GM10248 (cell line): ENCODE measurements at regions of chr16 and their contacts with region 1.

Region 1: DNA sequence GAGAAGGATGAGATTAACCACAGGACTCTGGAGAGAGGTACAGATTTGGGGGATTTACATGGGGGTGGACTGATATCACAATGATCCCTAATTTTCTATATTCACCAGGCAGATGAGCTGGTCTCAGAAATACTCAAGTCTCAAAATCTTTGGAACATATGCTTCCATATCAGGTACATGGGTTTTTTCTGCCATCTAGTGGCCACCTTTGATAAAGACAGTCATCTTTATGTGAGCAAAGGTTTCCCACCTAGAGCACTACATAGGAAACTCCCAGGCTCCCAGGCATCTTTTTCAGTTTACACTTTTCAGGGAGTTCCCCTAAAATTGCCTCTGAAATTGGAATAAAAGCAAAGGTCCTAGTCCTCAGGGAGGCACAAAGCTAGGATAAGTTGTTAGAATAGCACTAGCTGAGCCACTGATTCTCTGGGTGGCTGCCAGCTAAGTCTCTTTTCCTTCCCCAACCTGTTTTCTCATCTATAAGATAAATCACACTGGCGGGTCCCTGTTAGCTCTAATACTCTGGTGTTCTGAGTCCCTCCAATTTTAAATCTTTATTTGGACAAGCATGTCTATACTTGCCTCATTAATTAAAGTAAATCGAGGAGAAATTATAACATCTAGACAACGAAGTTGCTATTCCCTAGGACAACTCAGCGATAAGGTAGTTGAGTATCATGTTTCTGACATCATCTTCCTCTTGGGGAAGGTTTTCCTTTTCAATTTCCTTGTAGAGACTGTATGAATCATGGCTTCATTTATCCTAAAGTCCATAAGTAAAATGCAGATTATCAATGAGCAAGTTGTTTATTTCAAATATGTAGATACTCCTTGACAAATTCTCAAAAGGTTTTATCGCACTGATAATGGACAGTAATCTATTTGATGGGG is 19.0 kb upstream of the MON1B start:
- DNase-seq: peak; percentile 52
- CTCF ChIP-seq: peak; percentile 67

Region 2: DNA sequence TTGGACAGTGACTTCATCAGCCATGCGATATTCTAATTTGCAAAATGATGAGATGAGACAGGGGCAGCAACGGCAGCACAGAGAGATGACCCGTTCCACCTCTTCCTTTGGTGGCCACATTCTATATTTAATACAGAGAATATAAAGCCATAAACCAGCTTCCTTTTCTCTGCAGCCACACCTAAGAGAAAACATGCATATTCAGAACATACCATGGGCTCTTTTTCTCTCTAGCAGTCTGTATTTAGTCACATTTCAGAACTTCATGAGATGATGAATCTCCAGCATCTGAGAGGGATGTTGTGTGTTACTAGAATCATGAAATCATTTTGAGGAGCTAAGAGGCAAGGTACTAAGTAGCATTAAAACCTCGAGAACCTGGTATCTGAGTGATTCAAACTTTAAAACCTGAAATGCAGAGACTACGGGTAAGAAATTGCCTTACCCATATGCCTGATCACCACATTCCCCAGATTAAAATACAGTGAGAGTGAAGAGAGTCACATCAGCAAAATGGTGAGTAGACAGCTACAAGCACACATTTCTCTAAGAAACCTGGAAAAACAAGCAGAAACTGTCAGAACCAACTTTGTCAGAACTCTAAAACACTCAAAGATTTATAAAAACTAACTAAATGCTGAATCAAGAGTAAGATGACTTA is 1390.2 kb before region 1 on chr16:
- CTCF ChIA-PET with region 1: interaction called, 37 read pairs
- POLR2A ChIA-PET with region 1: no interaction called
- DNase-seq: no peak
- CTCF ChIP-seq: no peak

Region 3: GRCh38 chr16:75787440-75787839 is 1384.5 kb before region 1 on chr16:
- CTCF ChIA-PET with region 1: interaction called, 37 read pairs
- POLR2A ChIA-PET with region 1: no interaction called
- DNase-seq: no peak
- CTCF ChIP-seq: no peak

Region 4: DNA sequence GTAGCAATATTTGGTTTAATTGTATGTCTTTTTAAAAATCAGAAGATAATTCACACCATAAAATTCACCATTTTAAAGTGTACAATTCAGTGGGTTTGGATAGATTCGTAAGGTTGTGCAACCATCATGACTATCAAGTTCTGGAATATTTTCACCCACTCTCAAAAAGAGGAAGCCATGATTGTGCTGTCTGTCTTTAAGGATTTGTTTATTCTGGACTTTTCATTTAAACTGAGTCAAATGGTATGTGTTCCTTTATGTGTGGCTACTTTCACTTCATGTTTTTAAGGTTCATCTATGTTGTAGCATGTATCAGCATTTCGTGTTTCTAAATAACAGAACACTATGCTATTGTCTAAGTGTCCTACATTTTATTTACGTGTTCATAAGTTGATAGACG is 1377.6 kb before region 1 on chr16:
- CTCF ChIA-PET with region 1: interaction called, 18 read pairs
- POLR2A ChIA-PET with region 1: no interaction called
- DNase-seq: no peak
- CTCF ChIP-seq: no peak

Region 5: GRCh38 chr16:77157346-77158058 is 14.5 kb before region 1 on chr16:
- CTCF ChIA-PET with region 1: interaction called, 34 read pairs
- POLR2A ChIA-PET with region 1: no interaction called
- DNase-seq: no peak
- CTCF ChIP-seq: no peak

Region 6: DNA sequence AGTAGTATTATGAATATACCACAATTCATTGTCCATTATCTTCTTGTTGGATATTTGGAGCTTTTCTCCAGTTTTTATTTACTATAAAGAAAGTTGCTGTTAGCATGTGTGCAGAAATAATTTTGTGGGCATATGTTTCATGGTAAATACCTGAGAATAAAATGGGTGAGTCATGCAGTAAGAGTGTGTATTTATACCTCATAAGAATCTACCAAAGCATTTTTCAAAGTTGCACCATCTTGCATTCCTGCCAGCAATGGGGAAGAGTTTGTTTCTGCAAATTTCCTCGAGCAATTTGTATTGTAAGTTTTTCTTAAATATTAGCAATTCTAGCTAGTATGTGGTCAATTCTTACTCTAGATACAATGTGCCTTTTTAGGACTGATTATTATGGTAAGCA is 11.1 kb after region 1 on chr16:
- CTCF ChIA-PET with region 1: interaction called, 27 read pairs
- POLR2A ChIA-PET with region 1: no interaction called
- DNase-seq: no peak
- CTCF ChIP-seq: no peak

Region 7: DNA sequence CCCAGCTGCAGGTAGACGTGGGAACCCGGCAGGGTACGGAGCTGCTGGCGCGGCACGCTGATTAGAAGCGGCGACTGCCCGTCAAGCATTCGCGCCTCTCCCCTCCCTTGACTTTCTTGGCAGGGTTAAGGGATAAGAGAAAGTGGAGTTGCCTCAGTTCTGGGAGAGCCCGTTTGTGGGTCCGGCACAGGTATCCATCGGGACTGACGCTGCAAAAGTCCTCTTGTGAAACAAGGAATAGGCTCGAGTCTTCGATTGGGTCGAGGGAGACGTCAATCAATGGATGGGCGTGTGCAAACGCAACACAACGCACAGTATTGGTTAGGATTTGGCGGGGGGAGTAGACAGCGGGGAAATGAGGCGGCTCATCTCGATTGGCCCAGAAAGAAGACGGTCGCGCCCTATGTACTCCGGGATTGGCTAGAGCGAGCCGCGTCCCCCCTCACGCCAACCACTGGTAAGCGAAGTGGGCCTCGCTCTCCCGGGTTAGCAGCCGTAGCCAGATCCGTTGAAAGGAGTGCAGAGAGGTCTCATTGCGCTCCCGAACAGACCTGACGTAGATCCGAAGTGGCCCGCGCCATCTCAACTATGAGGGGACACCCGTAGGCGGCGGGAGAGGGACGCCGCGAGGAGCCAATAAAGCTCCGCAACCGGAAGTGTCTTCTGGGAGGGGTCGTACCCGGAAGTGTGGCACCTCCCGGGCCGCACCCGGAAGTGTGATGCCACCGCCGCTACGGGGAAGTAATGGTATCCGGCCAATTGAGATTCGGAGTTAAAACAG is 18.7 kb after region 1 on chr16 and contains the start of gene MON1B:
- CTCF ChIA-PET with region 1: interaction called, 24 read pairs
- POLR2A ChIA-PET with region 1: no interaction called
- DNase-seq: peak; percentile 97
- CTCF ChIP-seq: no peak

Region 8: GRCh38 chr16:77211880-77212740 is 40.1 kb after region 1 on chr16:
- CTCF ChIA-PET with region 1: no interaction called
- POLR2A ChIA-PET with region 1: no interaction called
- DNase-seq: peak; percentile 83
- CTCF ChIP-seq: no peak